Heart right ventricle (tissue), 16 donors: ENCODE measurements at regions of chr4 and their contacts with region 1.

Region 1: DNA sequence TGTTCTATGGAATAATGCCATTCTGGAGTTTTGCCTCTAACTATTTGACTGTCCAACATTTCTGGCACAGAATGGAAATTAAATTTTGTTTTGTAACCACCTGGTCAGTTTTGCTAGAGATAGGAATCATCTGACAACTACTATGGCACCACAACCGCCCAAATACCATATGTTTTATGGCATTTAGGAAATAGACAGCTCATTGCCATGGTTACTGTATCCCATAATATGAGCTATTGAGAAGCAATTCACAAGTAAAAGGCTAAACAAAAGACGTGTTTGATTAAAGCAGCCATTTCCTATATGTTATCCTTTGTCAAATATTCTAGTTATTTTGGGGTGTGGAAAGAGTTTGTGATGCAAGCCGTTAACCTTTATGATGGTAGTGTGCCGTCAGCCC is 1105.3 kb upstream of the LCORL start:
- DNase-seq: no peak
- ATAC-seq: no peak
- H3K4me3 ChIP-seq: no peak overlapping the region
- H3K27ac ChIP-seq: no peak overlapping the region
- H3K4me1 ChIP-seq: no peaks in the 10 kb centered on the region
- H3K27me3 ChIP-seq: no peaks in the 10 kb centered on the region
- CTCF ChIP-seq: no peak

Region 2: DNA sequence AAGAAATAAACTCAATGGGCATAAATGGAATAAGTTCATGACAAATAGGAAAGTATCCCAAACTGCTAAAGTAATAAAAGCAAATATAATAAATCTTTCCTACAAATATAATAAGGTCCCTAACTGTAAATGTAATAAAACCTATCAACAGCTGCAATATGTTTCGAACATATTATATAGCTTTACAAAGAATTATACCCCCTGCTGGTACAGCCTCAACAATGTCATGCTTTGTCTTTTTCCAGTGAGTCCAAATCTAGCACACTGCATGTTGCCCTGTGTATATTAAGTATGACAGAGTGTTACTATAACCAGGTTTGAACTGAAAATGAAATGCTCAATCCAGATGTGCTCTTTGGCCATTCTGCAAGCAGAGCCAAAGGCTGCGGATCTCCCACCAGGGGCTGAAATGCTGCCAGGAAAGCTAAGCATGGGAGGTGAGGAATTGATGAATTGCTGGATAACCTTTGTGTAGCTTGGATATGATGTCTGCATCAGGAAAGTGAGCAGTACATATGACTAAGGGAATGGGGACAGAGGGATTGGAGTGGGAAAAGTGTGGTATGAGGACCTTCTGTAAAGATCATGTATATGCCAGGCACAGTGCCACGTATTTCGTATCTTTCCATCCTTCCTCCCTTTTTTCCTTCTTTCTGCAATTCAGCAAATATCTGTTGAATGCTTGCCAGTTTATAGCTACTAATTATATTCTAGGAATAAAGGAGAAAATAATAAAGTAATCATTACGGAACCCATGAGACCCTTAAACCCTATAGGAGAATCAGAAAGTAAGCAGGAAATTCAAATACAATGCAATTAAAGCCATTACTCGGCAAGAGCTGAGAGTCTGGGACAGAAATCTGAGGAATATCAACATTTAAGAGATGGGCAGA is 150.7 kb before region 1 on chr4:
- intact Hi-C with region 1: no loop called
- DNase-seq: no peak
- ATAC-seq: no peak
- H3K4me3 ChIP-seq: no peak overlapping the region
- H3K27ac ChIP-seq: no peak overlapping the region
- H3K4me1 ChIP-seq: no peaks in the 10 kb centered on the region
- H3K27me3 ChIP-seq: no peaks in the 10 kb centered on the region
- CTCF ChIP-seq: no peak

Region 3: DNA sequence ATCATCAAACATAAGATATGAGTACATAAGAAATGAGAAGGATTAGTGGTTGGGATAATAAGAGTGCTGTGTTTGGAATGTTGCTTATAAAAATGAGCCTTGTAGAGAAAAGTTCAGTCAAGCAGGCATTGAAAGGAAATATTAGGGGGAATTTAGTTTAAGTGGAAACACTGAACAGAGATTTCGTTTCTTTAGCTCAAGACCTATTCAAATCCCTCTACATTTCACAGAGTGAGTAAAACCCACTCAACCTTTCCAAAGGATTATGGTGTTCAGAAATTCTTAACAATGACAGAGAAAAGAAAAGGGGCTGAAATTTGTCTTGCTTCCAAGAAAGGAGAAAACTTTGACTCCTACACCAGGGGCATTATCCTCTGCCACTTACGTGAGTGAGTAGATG is 33.0 kb before region 1 on chr4:
- intact Hi-C with region 1: loop called in 1 of 10 experiments (anchors 5 kb)
- DNase-seq: no peak
- ATAC-seq: no peak
- H3K4me3 ChIP-seq: no peak overlapping the region
- H3K27ac ChIP-seq: no peak overlapping the region
- H3K4me1 ChIP-seq: no peaks in the 10 kb centered on the region
- H3K27me3 ChIP-seq: no peaks in the 10 kb centered on the region
- CTCF ChIP-seq: no peak

Region 4: GRCh38 chr4:19146038-19146437 is 19.1 kb after region 1 on chr4:
- intact Hi-C with region 1: no loop called
- DNase-seq: no peak
- ATAC-seq: no peak
- H3K4me3 ChIP-seq: no peak overlapping the region
- H3K27ac ChIP-seq: no peak overlapping the region
- H3K4me1 ChIP-seq: no peaks in the 10 kb centered on the region
- H3K27me3 ChIP-seq: no peaks in the 10 kb centered on the region
- CTCF ChIP-seq: no peak